ENCODE measurements at regions of chr22 and their contacts with region 1.

Region 1: DNA sequence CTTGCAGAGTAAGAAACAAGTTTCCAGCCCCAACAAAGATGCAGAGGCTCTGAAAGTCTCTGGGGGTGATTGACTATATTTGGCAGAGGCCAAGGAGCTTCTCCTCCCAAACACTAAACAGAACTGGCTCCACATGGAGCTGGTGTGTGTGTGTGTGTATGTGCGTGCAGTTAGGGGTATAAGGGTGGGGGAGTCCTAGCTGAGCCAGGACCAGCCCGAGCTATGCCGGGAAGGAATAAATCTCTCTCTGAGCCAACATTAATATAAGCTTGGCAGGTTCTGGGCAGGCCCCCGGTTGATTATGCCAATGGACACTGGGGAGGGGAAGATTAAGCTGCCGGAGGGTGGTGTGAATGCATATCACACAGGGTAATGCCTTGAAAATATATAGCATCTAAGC is 324.2 kb downstream of the MIAT start:
- DNase-seq: no peak
- H3K4me3 ChIP-seq: no peak overlapping the region
- H3K27ac ChIP-seq: no peak overlapping the region
- H3K4me1 ChIP-seq: peaks cover 4% of the 10 kb centered on the region
- H3K27me3 ChIP-seq: peaks cover 72% of the 10 kb centered on the region
- CTCF ChIP-seq: no peak

Region 2: GRCh38 chr22:26906464-26906863 is 75.1 kb before region 1 on chr22:
- intact Hi-C with region 1: loop called (anchors 5 kb)
- DNase-seq: no peak
- H3K4me3 ChIP-seq: no peak overlapping the region
- H3K27ac ChIP-seq: no peak overlapping the region
- H3K4me1 ChIP-seq: peaks cover 7% of the 10 kb centered on the region
- H3K27me3 ChIP-seq: peaks cover 41% of the 10 kb centered on the region
- CTCF ChIP-seq: no peak

Region 3: GRCh38 chr22:27258686-27259085 is 277.1 kb after region 1 on chr22:
- intact Hi-C with region 1: no loop called
- DNase-seq: no peak
- H3K4me3 ChIP-seq: no peak overlapping the region
- H3K27ac ChIP-seq: no peak overlapping the region
- H3K4me1 ChIP-seq: no peaks in the 10 kb centered on the region
- H3K27me3 ChIP-seq: peaks cover 72% of the 10 kb centered on the region
- CTCF ChIP-seq: no peak